T-cell (primary cell): ENCODE measurements at regions of chr17 and their contacts with region 1.

Region 1: GRCh38 chr17:2899906-2900305 is 103.7 kb downstream of the RAP1GAP2 start:
- DNase-seq: no peak
- ATAC-seq: no peak
- H3K4me3 ChIP-seq: no peak overlapping the region
- H3K4me3 Mint-ChIP-seq: no peak overlapping the region
- H3K27ac ChIP-seq: no peak overlapping the region
- H3K27ac Mint-ChIP-seq: no peak overlapping the region
- H3K4me1 ChIP-seq: peaks cover 0 to 15% of the 10 kb centered on the region in 2 experiments
- H3K4me1 Mint-ChIP-seq: peaks cover 0 to 10% (median 5%) of the 10 kb centered on the region in 3 donors
- H3K27me3 ChIP-seq: no peaks in the 10 kb centered on the region
- H3K27me3 Mint-ChIP-seq: no peaks in the 10 kb centered on the region

Region 2: DNA sequence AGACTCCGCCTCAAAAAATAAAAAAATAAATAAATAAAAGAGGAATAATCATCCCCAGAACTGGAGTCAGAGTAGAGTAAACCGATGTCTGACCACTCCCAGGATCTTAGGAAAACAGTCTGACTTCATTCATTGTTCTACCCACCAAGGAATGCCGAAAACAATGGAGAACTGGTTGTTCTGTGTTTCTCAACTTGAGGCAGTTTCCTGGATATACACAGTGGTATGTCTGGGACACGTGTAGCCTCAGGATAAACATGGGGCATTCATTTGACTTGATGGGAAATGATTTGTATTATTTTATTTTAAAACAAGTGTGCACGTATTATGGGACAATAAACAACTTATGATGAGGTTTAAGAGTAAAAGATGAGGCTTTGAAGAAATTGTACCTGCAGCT is 339.2 kb before region 1 on chr17:
- CTCF ChIA-PET with region 1: no interaction called
- POLR2A ChIA-PET with region 1: no interaction called
- DNase-seq: no peak
- ATAC-seq: no peak
- H3K4me3 ChIP-seq: no peak overlapping the region
- H3K4me3 Mint-ChIP-seq: no peak overlapping the region
- H3K27ac ChIP-seq: no peak overlapping the region
- H3K27ac Mint-ChIP-seq: no peak overlapping the region
- H3K4me1 ChIP-seq: peaks cover 3 to 7% of the 10 kb centered on the region in 2 experiments
- H3K4me1 Mint-ChIP-seq: peaks cover 9 to 19% (median 12%) of the 10 kb centered on the region in 3 donors
- H3K27me3 ChIP-seq: peaks cover 0 to 14% of the 10 kb centered on the region in 2 experiments
- H3K27me3 Mint-ChIP-seq: peaks cover 0 to 9% of the 10 kb centered on the region in 2 donors

Region 3: GRCh38 chr17:2911035-2911754 is 11.3 kb after region 1 on chr17:
- CTCF ChIA-PET with region 1: no interaction called
- POLR2A ChIA-PET with region 1: no interaction called
- DNase-seq: no peak
- ATAC-seq: no peak
- H3K4me3 ChIP-seq: no peak overlapping the region
- H3K4me3 Mint-ChIP-seq: no peak overlapping the region
- H3K27ac ChIP-seq: no peak overlapping the region
- H3K27ac Mint-ChIP-seq: no peak overlapping the region
- H3K4me1 ChIP-seq: peaks cover 0 to 24% of the 10 kb centered on the region in 2 experiments
- H3K4me1 Mint-ChIP-seq: peaks cover 11 to 19% (median 15%) of the 10 kb centered on the region in 3 donors
- H3K27me3 ChIP-seq: no peaks in the 10 kb centered on the region
- H3K27me3 Mint-ChIP-seq: no peaks in the 10 kb centered on the region

Region 4: DNA sequence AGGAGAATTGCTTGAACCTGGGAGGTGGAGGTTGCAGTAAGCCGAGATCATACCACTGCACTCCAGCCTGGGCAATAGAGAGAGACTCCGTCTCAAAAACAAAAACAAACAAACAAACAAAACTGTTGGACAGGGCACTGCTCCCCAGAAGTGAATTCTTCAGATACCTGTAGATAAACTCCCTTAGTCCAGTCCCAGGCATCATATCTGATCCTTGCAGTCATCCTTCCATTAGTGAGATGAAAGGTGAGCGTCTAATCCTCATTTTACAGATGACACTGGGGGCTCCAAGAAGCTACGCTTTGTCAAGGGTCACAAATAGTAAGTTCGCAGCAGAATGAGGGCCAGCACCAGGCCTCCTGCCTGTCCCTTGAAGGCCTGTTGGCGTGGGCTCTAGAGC is 61.5 kb after region 1 on chr17:
- CTCF ChIA-PET with region 1: interaction called in 1 of 2 experiments, 13 read pairs
- POLR2A ChIA-PET with region 1: no interaction called
- DNase-seq: no peak
- ATAC-seq: no peak
- H3K4me3 ChIP-seq: no peak overlapping the region
- H3K4me3 Mint-ChIP-seq: no peak overlapping the region
- H3K27ac ChIP-seq: no peak overlapping the region
- H3K27ac Mint-ChIP-seq: no peak overlapping the region
- H3K4me1 ChIP-seq: peaks cover 0 to 5% of the 10 kb centered on the region in 2 experiments
- H3K4me1 Mint-ChIP-seq: peaks cover 0 to 2% (median 0%) of the 10 kb centered on the region in 3 donors
- H3K27me3 ChIP-seq: peaks cover 0 to 3% of the 10 kb centered on the region in 2 experiments
- H3K27me3 Mint-ChIP-seq: no peaks in the 10 kb centered on the region